Caco-2 (cell line): ENCODE measurements at regions of chr2 and their contacts with region 1.

Region 1: GRCh38 chr2:133561045-133561852 is 7.0 kb downstream of the NCKAP5 start:
- DNase-seq: peak in 1 of 2 experiments; percentile 21
- H3K4me3 ChIP-seq: no peak overlapping the region
- H3K4me3 Mint-ChIP-seq: no peak overlapping the region
- H3K27ac Mint-ChIP-seq: no peak overlapping the region
- H3K4me1 ChIP-seq: no peaks in the 10 kb centered on the region
- H3K4me1 Mint-ChIP-seq: no peaks in the 10 kb centered on the region
- H3K27me3 ChIP-seq: no peaks in the 10 kb centered on the region
- H3K27me3 Mint-ChIP-seq: no peaks in the 10 kb centered on the region
- CTCF ChIP-seq: peak; percentile 58 to 72

Region 2: DNA sequence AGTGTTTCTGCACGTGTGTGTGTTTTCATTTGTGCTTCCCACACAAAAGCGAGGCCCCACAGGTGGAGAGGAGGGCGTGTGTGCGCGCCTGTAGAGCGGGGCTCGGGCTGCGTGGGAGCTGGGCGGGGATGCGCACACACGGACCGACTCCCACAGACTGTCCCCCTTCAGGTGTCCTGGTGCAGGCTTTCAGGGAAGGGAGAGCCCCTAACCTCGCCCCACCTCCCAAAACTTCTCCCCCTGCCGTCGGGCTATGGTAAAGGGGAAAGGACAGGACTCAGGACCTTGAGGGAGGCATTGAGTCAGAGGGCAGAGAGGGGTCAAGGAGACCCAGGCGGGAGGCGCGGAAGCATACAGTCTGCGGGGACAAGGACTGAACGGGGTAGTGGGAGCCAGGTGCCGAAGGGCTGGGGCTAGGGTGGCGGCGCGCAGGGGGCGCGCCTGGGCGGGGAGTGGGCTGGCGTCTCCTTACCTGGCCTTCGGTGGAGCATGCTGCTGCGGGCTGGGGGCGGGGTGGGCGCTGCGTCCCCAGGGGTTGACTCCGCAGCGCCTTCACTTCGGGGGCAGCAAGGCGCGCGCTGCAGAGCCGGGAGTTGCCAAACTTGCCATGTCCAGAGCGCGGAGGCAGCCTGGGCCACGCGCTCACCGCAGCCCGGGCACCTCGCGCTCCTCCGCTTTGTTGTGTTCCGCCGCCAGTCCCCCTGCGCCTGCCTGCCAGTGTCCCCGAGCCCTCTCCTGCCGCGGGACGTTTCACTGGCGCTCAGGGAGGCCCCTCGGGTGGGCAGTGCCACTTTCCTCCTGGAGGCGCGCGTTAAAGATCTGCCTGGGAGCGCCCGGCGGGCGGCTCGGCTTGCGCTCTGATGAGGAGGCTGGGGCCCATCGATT is 295.0 kb before region 1 on chr2:
- CTCF ChIA-PET with region 1: no interaction called
- POLR2A ChIA-PET with region 1: no interaction called
- intact Hi-C with region 1: loop called (anchors 1 kb)
- DNase-seq: no peak
- H3K4me3 ChIP-seq: peak overlapping the region; percentile 24; the same call in 1 of the 2 replicates
- H3K4me3 Mint-ChIP-seq: peak overlapping the region; percentile 66
- H3K27ac Mint-ChIP-seq: no peak overlapping the region
- H3K4me1 ChIP-seq: no peaks in the 10 kb centered on the region
- H3K4me1 Mint-ChIP-seq: peaks cover 15% of the 10 kb centered on the region
- H3K27me3 ChIP-seq: no peaks in the 10 kb centered on the region
- H3K27me3 Mint-ChIP-seq: no peaks in the 10 kb centered on the region
- CTCF ChIP-seq: no peak

Region 3: DNA sequence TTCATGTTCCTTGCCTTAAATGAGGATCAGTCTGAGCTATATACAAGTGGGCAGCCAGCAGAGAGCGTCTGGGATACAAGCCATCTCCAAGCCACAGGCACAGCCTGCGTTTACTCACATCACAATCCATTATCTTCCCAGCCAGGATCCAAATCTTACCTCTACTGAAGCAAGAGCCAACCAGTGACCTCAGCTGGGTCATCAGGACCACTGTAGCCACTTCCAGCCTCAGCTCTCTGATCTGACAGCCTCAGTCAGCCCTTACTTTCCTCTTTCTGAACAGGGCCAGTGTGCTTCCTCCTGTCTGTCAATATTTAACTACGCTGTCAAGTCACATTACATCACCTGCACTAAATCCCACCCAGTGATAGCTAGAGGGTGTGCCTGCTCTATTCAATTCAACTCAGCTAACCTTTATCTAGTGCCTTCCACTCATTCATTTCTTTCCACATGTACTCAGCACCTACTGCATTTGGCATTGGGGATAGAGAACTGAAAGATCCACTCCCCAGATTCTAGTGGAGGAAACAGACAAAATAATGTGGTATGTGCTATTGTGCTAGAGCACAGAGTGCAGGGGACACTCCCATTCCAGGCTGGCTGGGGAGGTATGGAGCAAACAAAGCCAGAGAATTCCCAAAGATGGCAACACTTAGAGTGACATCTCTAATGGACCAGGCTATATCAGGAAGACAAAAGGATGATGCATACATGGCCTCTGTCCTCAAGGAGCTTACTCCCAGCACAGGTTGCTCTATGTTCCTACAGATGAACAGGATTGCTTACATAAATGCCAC is 139.5 kb before region 1 on chr2:
- CTCF ChIA-PET with region 1: interaction called, 13 read pairs
- POLR2A ChIA-PET with region 1: no interaction called
- intact Hi-C with region 1: loop called (anchors 1 kb)
- DNase-seq: peak; percentile 52 to 63
- H3K4me3 ChIP-seq: no peak overlapping the region
- H3K4me3 Mint-ChIP-seq: peak overlapping the region; percentile 60
- H3K27ac Mint-ChIP-seq: peak overlapping the region; percentile 36
- H3K4me1 ChIP-seq: peaks cover 26% of the 10 kb centered on the region
- H3K4me1 Mint-ChIP-seq: peaks cover 27% of the 10 kb centered on the region
- H3K27me3 ChIP-seq: no peaks in the 10 kb centered on the region
- H3K27me3 Mint-ChIP-seq: no peaks in the 10 kb centered on the region
- CTCF ChIP-seq: no peak

Region 4: DNA sequence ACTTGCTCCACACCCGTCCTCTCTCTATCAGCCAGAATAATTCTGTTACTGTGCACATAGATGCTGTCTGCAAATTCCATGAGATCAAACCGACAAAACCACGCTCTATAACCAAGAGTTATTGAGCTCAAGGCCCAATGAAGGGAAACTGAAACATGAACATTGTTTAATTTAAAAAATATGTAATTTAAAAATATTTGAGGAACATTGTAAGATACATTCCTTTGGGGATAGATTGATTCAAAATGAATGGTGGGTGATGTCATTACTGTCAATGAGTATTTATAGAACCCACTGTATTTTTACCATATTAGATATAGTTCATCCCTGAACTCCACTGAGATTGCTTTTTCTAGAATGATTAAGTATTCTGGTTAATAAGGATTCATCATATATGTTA is 43.4 kb before region 1 on chr2:
- CTCF ChIA-PET with region 1: interaction called, 5 read pairs
- POLR2A ChIA-PET with region 1: no interaction called
- intact Hi-C with region 1: loop called (anchors 5 kb)
- DNase-seq: no peak
- H3K4me3 ChIP-seq: no peak overlapping the region
- H3K4me3 Mint-ChIP-seq: no peak overlapping the region
- H3K27ac Mint-ChIP-seq: no peak overlapping the region
- H3K4me1 ChIP-seq: no peaks in the 10 kb centered on the region
- H3K4me1 Mint-ChIP-seq: no peaks in the 10 kb centered on the region
- H3K27me3 ChIP-seq: no peaks in the 10 kb centered on the region
- H3K27me3 Mint-ChIP-seq: no peaks in the 10 kb centered on the region
- CTCF ChIP-seq: no peak

Region 5: GRCh38 chr2:133532919-133533318 is 28.3 kb before region 1 on chr2:
- CTCF ChIA-PET with region 1: no interaction called
- POLR2A ChIA-PET with region 1: no interaction called
- intact Hi-C with region 1: loop called (anchors 1 kb)
- DNase-seq: no peak
- H3K4me3 ChIP-seq: no peak overlapping the region
- H3K4me3 Mint-ChIP-seq: no peak overlapping the region
- H3K27ac Mint-ChIP-seq: no peak overlapping the region
- H3K4me1 ChIP-seq: peaks cover 5% of the 10 kb centered on the region; the same call in 1 of the 2 replicates
- H3K4me1 Mint-ChIP-seq: peaks cover 4% of the 10 kb centered on the region
- H3K27me3 ChIP-seq: no peaks in the 10 kb centered on the region
- H3K27me3 Mint-ChIP-seq: peaks cover 5% of the 10 kb centered on the region
- CTCF ChIP-seq: no peak